PC-3 (cell line): ENCODE measurements at regions of chrX and their contacts with region 1.

Region 1: GRCh38 chrX:77910108-77910840 is at the start of gene ATP7A:
- DNase-seq: peak; percentile 86
- ATAC-seq: peak; percentile 87
- H3K4me3 ChIP-seq: peak within 1 kb of the TSS; percentile 96
- H3K27ac ChIP-seq: peak within 1 kb of the TSS; percentile 39
- H3K4me1 ChIP-seq: peaks cover 7% of the 10 kb centered on the region
- H3K27me3 ChIP-seq: no peaks in the 10 kb centered on the region
- CTCF ChIP-seq: peak; percentile 54
- total RNA-seq, gene ATP7A: 3.4 and 4.3 TPM in 2 replicates

Region 2: DNA sequence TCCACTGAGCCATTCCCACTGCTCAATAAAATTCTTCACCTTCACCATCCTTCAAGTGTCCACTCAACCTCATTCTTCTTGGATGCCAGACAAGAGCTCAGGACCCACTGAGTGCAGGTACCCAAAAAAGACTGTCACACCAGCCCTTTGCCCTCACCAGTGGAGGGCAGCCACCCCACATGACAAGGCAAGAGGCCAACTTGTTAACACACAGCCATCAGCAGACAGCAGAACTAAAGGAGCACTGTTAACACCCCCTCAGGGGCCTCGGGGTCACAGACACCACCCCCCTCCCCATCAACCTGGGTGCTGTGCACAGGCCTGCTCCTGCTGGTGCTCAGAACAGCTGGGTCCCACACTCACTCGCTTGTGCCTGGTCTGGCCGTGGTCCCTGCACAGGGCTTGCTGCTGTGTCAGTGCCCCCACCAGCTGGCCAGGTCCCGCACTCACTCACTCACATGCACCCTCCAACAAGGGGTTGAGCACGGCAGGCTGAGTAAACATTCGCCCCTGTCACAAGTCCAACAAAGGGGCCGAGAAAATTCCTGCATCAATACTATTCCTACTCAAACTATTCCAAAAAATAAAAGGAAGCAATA is 178.4 kb before region 1 on chrX:
- CTCF ChIA-PET with region 1: no interaction called
- POLR2A ChIA-PET with region 1: no interaction called
- intact Hi-C with region 1: no loop called
- DNase-seq: no peak
- ATAC-seq: no peak
- H3K4me3 ChIP-seq: no peak overlapping the region
- H3K27ac ChIP-seq: no peak overlapping the region
- H3K4me1 ChIP-seq: no peaks in the 10 kb centered on the region
- H3K27me3 ChIP-seq: no peaks in the 10 kb centered on the region
- CTCF ChIP-seq: no peak

Region 3: GRCh38 chrX:77742788-77743476 is 167.3 kb before region 1 on chrX:
- CTCF ChIA-PET with region 1: no interaction called
- POLR2A ChIA-PET with region 1: no interaction called
- intact Hi-C with region 1: no loop called
- DNase-seq: no peak
- ATAC-seq: peak; percentile 22
- H3K4me3 ChIP-seq: no peak overlapping the region
- H3K27ac ChIP-seq: no peak overlapping the region
- H3K4me1 ChIP-seq: no peaks in the 10 kb centered on the region
- H3K27me3 ChIP-seq: no peaks in the 10 kb centered on the region
- CTCF ChIP-seq: no peak

Region 4: DNA sequence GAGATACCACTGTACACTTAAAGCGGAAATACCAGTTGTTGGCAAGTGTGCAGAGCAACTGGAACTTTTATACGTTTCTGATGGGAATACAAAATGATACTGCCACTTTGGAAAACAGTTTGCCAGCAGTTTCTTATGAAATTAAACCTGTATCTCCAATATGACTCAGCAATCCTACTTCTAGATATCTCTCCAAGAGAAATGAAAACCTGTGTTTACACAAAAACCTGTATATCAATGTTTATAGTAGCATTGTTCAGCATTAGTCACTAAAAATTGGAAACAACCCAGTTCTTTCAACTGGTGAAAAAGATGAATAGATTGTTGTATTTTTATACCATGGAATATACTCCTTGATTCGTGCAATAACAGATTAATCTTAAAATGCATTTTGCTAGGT is 27.0 kb after region 1 on chrX:
- CTCF ChIA-PET with region 1: no interaction called
- POLR2A ChIA-PET with region 1: no interaction called
- intact Hi-C with region 1: loop called (anchors 2 kb)
- DNase-seq: peak; percentile 92
- ATAC-seq: peak; percentile 94
- H3K4me3 ChIP-seq: peak overlapping the region; percentile 27
- H3K27ac ChIP-seq: peak overlapping the region; percentile 72
- H3K4me1 ChIP-seq: peaks cover 22% of the 10 kb centered on the region
- H3K27me3 ChIP-seq: no peaks in the 10 kb centered on the region
- CTCF ChIP-seq: no peak

Region 5: GRCh38 chrX:77953708-77954107 is 43.4 kb after region 1 on chrX:
- CTCF ChIA-PET with region 1: no interaction called
- POLR2A ChIA-PET with region 1: no interaction called
- intact Hi-C with region 1: loop called (anchors 2 kb)
- DNase-seq: peak; percentile 54
- ATAC-seq: peak; percentile 96
- H3K4me3 ChIP-seq: no peak overlapping the region
- H3K27ac ChIP-seq: no peak overlapping the region
- H3K4me1 ChIP-seq: peaks cover 12% of the 10 kb centered on the region
- H3K27me3 ChIP-seq: no peaks in the 10 kb centered on the region
- CTCF ChIP-seq: no peak

Region 6: DNA sequence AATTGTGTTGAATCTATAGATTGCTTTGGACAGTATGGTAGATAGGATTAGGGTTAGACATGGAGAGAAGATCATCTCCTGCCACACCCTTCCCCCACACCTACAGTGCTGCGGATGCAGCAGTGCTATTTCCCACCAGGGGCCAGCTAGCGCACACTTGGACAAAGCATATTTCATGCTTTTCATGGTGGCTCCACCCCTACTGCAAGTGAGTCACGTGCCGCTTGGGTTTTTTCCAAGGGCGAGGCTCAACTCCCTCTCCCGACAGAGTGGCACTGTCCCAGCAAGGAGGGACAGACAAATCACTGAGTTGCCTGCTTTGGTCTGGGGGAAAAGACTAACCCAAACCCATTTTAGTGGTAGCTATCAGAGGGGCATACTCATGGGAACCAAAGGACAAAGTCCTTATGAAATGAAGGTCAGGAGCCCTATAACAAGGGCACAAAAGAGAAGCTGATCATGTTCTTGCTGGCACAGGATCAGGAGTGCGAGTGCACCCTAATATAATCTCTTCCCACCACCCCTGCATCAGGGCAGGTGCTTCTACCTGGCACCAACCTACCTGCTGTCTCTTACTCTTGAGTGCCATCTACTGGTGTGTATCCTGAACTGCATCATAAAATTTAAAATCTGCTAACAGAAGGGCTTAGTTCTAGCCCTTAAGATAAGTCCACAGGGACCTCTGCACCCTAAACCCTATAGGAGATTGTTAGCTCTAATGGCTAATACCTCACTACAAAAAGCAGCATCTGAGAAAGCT is 114.3 kb after region 1 on chrX:
- CTCF ChIA-PET with region 1: interaction called, 7 read pairs
- POLR2A ChIA-PET with region 1: no interaction called
- intact Hi-C with region 1: loop called (anchors 1 kb)
- DNase-seq: peak; percentile 71
- ATAC-seq: peak; percentile 81
- H3K4me3 ChIP-seq: 0 out of 2 replicates have a peak overlapping the region, but pooled peaks have one; percentile 17
- H3K27ac ChIP-seq: no peak overlapping the region; the same call in 1 of the 2 replicates
- H3K4me1 ChIP-seq: peaks cover 15% of the 10 kb centered on the region
- H3K27me3 ChIP-seq: no peaks in the 10 kb centered on the region
- CTCF ChIP-seq: peak; percentile 88